ENCODE measurements at regions of chr2 and their contacts with region 1.

Region 1: DNA sequence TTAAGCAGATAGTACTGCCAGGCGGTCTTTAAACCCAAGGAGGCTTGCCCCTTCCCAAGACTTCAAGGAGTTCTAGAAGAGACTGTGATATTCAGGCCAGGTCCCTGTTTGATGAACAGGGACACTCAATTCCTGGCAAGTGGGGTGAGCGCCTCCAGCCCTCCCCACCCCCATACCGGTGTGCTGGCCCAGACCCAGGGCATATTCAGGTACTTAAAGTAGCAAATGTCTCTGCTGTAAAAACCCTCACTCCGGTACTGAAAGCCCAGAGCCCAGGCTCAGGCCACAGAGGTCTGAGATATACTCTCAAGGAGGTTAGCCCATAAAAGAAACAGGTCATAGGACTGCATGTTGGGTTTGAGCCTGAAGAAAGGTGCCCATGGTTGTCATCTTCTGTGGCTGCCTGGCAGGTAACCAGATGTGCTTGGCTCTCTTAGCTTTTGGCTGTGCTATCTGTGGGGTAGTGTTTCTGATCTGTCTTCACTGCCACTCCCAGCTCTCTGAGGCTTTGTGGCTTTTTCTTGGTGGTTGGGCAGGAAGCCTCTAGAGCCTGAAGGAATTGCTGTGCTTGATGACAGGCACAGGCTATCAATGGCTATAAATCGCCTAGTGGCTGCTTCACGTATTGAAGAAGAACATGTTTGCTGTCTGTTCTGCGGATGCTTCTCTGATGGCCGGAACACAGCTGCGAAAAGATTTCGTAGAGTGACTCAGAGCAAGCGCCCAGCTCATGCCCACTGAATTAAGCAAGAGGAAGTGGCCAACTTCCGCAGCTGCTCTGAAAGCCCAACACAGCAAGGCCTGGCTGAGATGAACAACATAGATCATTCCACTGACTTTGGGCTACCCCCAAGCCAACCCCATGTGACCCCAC is 63.3 kb upstream of the ALPP start:
- DNase-seq: peak; percentile 76 to 86
- ATAC-seq: peak; percentile 80 to 93 (median 88)
- H3K4me3 ChIP-seq: no peak overlapping the region
- H3K4me3 Mint-ChIP-seq: peak overlapping the region; percentile 84
- H3K27ac ChIP-seq: peak overlapping the region; percentile 95
- H3K27ac Mint-ChIP-seq: peak overlapping the region; percentile 99
- H3K4me1 ChIP-seq: peaks cover 81% of the 10 kb centered on the region
- H3K4me1 Mint-ChIP-seq: peaks cover 84 to 91% of the 10 kb centered on the region in 2 donors
- H3K27me3 ChIP-seq: no peaks in the 10 kb centered on the region
- H3K27me3 Mint-ChIP-seq: no peaks in the 10 kb centered on the region
- CTCF ChIP-seq: peak; percentile 63

Region 2: GRCh38 chr2:231674587-231675338 is 640.5 kb before region 1 on chr2:
- intact Hi-C with region 1: no loop called
- DNase-seq: peak; percentile 56 to 72
- ATAC-seq: peak; percentile 74 to 81 (median 78)
- H3K4me3 ChIP-seq: no peak overlapping the region
- H3K4me3 Mint-ChIP-seq: no peak overlapping the region
- H3K27ac ChIP-seq: peak overlapping the region; percentile 69
- H3K27ac Mint-ChIP-seq: peak overlapping the region in 1 of 2 donors; percentile 68
- H3K4me1 ChIP-seq: peaks cover 51% of the 10 kb centered on the region
- H3K4me1 Mint-ChIP-seq: peaks cover 13 to 21% of the 10 kb centered on the region in 2 donors
- H3K27me3 ChIP-seq: no peaks in the 10 kb centered on the region
- H3K27me3 Mint-ChIP-seq: no peaks in the 10 kb centered on the region
- CTCF ChIP-seq: peak; percentile 67

Region 3: DNA sequence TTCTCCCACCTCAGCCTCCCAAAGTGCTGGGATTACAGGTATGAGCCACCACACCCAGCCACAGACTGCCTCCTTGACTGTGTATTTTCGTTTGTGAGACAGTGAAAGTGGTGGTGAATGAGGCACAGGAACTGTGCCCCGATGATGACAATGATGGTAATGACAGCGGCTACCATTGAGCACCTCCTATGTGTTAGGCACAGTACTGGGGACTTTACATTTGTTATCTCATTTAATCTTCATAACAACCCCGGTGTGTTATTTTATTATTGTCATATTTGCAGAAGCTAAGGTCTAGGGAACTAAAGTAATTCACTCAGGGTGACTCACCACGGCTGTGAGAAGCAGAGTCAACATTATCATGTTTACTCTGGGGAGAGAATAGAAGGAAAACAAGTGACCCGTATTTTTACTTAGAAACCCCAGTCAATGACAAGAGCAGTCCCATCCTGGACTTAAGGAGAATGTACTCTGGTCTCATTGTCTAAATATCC is 14.3 kb before region 1 on chr2:
- intact Hi-C with region 1: loop called (anchors 1 kb)
- DNase-seq: no peak
- ATAC-seq: peak; percentile 22 to 53 (median 38)
- H3K4me3 ChIP-seq: no peak overlapping the region
- H3K4me3 Mint-ChIP-seq: peak overlapping the region; percentile 37
- H3K27ac ChIP-seq: no peak overlapping the region
- H3K27ac Mint-ChIP-seq: peak overlapping the region; percentile 87
- H3K4me1 ChIP-seq: peaks cover 24% of the 10 kb centered on the region
- H3K4me1 Mint-ChIP-seq: peaks cover 25 to 28% of the 10 kb centered on the region in 2 donors
- H3K27me3 ChIP-seq: no peaks in the 10 kb centered on the region
- H3K27me3 Mint-ChIP-seq: no peaks in the 10 kb centered on the region
- CTCF ChIP-seq: no peak

Region 4: DNA sequence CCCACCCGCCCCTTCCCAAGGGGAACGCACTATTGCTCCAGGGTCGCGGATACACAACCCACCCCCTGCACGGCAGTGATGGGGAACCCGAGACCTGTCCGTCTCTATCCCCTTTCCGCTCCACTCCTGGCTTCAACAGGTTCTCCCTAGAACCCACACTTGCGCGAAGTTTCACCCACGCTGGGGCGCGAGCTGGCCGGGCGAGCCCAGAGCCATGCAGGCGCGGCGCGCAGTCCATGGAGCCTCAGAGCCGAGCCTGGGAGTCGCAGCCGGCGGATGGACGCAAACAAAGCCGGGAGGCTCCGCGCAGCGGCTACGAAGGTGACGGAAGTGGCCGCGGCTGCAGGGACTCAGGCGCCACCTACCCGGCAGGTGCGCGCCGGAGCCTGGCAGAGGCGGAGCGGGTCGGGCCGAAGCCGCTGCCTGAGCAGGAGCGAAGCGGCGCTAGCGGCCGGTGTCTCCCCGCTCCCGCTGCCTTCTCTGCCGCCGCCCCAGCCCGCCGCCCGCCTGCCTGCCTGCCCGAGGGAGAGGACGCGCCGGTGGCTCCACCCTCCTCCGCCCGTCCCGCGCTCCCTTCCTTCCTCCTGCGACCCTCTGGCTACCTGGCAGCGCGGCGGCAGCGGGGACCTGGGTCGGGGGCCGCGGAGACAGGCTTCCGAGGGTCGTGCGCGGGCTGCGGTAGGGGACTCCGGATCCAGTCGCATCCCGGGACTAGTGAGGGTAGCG is 105.3 kb after region 1 on chr2:
- intact Hi-C with region 1: no loop called
- DNase-seq: peak in 1 of 2 donors; percentile 51
- ATAC-seq: no peak
- H3K4me3 ChIP-seq: no peak overlapping the region
- H3K4me3 Mint-ChIP-seq: no peak overlapping the region
- H3K27ac ChIP-seq: no peak overlapping the region
- H3K27ac Mint-ChIP-seq: no peak overlapping the region
- H3K4me1 ChIP-seq: peaks cover 8% of the 10 kb centered on the region
- H3K4me1 Mint-ChIP-seq: peaks cover 0 to 5% of the 10 kb centered on the region in 2 donors
- H3K27me3 ChIP-seq: peaks cover 14% of the 10 kb centered on the region
- H3K27me3 Mint-ChIP-seq: peaks cover 35 to 42% of the 10 kb centered on the region in 2 donors
- CTCF ChIP-seq: no peak